Stomach (tissue), 19 donors: ENCODE measurements at regions of chr1 and their contacts with region 1.

Region 1: GRCh38 chr1:61184040-61184713 is 101.8 kb downstream of the NFIA start:
- DNase-seq: peak; percentile 96 to 97
- H3K4me3 ChIP-seq: peak overlapping the region; percentile 34 to 47 (median 38)
- H3K27ac ChIP-seq: peak overlapping the region; percentile 81 to 93 (median 86)
- H3K4me1 ChIP-seq: peaks cover 37 to 80% (median 61%) of the 10 kb centered on the region in 4 donors
- H3K27me3 ChIP-seq: no peaks in the 10 kb centered on the region
- CTCF ChIP-seq: no peak
- EP300 ChIP-seq: no peak
- POLR2A ChIP-seq: no peak

Region 2: DNA sequence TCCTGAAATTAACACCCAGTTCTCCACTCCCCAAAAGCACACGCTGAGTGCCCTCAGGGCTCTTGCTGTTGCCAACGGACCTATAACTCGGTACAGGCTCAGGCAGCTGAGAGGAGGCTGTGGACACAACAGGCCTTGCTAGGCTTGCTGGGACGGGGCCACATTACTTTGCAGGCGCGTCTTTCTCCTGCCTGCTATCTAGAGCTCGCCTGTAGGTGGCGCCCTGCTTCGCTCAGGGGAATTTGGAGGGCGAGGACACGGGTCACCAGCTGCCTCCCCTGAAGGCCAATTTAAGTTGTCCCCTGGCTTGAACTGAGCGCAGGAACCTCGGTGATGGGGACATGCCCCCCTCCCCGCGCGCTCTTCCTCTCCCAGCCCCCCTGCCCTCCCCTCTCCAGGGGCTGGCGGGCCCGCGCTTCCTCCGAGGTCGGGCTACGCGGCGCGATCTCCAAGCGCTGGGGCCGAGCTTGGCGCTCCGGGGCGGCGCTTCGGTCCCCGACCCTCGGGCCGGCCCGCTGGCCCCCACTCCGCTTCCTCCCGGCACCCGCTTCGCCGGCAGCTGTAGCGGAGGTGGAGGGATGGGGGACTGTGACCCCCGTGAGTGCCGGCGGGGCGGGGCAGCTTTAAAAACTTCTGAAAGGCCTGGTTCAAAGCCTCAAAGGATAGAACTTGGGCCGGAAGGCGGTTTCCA is 134.2 kb before region 1 on chr1:
- intact Hi-C with region 1: no loop called
- DNase-seq: peak; percentile 96 to 97
- H3K4me3 ChIP-seq: peak overlapping the region; percentile 74 to 95 (median 88)
- H3K27ac ChIP-seq: peak overlapping the region; percentile 93 to 99 (median 95)
- H3K4me1 ChIP-seq: peaks cover 13 to 47% (median 38%) of the 10 kb centered on the region in 4 donors
- H3K27me3 ChIP-seq: peaks cover 0 to 21% (median 0%) of the 10 kb centered on the region in 3 donors
- CTCF ChIP-seq: peak in 6 of 7 experiments; percentile 52 to 98 (median 95)
- EP300 ChIP-seq: no peak
- POLR2A ChIP-seq: no peak

Region 3: GRCh38 chr1:61322769-61323168 is 138.6 kb after region 1 on chr1:
- intact Hi-C with region 1: loop called (anchors 10 kb)
- DNase-seq: peak in 1 of 2 donors; percentile 49
- H3K4me3 ChIP-seq: no peak overlapping the region
- H3K27ac ChIP-seq: peak overlapping the region in 2 of 5 donors; percentile 6 to 19
- H3K4me1 ChIP-seq: peaks cover 30 to 70% (median 50%) of the 10 kb centered on the region in 4 donors
- H3K27me3 ChIP-seq: no peaks in the 10 kb centered on the region
- CTCF ChIP-seq: no peak
- EP300 ChIP-seq: no peak
- POLR2A ChIP-seq: no peak

Region 4: DNA sequence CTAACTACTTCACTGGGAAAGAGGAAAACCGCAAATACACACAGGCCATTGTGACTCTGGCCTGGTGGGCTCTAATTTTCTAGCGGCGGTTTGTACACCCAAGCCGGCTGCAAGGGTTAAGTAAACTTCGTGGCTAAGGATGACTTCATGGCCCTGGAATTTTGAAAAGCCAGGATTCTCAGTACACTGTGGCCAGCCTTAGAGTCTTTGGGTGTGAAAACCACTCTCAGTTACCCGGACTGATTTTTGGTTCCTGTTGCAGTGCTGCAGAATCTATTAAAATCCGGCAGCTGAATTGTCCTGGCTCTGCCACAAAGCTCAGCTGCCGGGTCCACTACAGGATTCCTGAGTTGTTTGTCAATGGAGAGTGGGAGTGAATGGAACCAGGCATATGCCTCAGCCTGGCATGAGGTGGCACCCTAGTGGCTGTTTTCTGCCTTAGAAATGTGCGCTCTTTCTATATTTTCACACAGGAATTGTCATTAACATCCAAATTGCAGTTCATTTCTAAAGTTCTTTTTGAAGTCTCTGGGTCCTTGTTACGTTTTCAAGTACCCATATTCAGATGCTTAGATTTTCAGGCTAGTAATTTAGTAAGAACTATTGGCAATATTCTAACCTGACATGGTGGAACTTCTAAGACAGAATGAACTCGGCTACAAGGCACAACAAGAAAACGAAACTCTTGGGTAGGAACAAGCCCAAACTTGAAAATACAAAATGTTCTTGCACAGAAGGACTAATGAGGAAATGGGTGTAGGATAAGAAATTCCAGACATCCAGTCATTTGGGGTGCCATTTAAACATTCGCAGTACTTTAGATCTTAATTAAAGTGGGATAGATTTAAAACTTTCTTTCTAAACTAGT is 154.0 kb after region 1 on chr1:
- intact Hi-C with region 1: no loop called
- DNase-seq: peak; percentile 73 to 86
- H3K4me3 ChIP-seq: peak overlapping the region in 3 of 4 donors; percentile 6 to 17 (median 14)
- H3K27ac ChIP-seq: peak overlapping the region; percentile 7 to 81 (median 76)
- H3K4me1 ChIP-seq: peaks cover 13 to 40% (median 23%) of the 10 kb centered on the region in 4 donors
- H3K27me3 ChIP-seq: no peaks in the 10 kb centered on the region
- CTCF ChIP-seq: peak in 6 of 7 experiments; percentile 45 to 91 (median 68)
- EP300 ChIP-seq: no peak
- POLR2A ChIP-seq: no peak